ENCODE measurements at regions of chr1 and their contacts with region 1.

Region 1: GRCh38 chr1:96756789-96757188 is 35.2 kb downstream of the PTBP2 start:
- DNase-seq: peak; percentile 9
- ATAC-seq: peak; percentile 64; the same call in 2 of the 3 replicates
- H3K4me3 ChIP-seq: no peak overlapping the region
- H3K27ac ChIP-seq: no peak overlapping the region
- H3K4me1 ChIP-seq: no peaks in the 10 kb centered on the region
- H3K27me3 ChIP-seq: no peaks in the 10 kb centered on the region
- CTCF ChIP-seq: peak; percentile 25
- EP300 ChIP-seq: no peak
- POLR2A ChIP-seq: no peak
- RAD21 ChIP-seq: peak; percentile 19; the same call in 1 of the 2 replicates

Region 2: GRCh38 chr1:96538111-96538641 is 218.6 kb before region 1 on chr1:
- CTCF ChIA-PET with region 1: no interaction called
- POLR2A ChIA-PET with region 1: no interaction called
- in situ Hi-C with region 1: no loop called
- intact Hi-C with region 1: loop called (anchors 5 kb)
- DNase-seq: peak; percentile 31
- ATAC-seq: peak; percentile 96
- H3K4me3 ChIP-seq: no peak overlapping the region
- H3K27ac ChIP-seq: no peak overlapping the region
- H3K4me1 ChIP-seq: no peaks in the 10 kb centered on the region
- H3K27me3 ChIP-seq: 0 out of 5 replicates have a peak, but pooled peaks cover 0 to 3% of the 10 kb centered on the region in 2 experiments
- CTCF ChIP-seq: peak; percentile 69
- EP300 ChIP-seq: no peak
- POLR2A ChIP-seq: no peak
- RAD21 ChIP-seq: no peak

Region 3: GRCh38 chr1:96698342-96698983 is 58.3 kb before region 1 on chr1:
- CTCF ChIA-PET with region 1: no interaction called
- POLR2A ChIA-PET with region 1: no interaction called
- in situ Hi-C with region 1: loop called (anchors 10 kb)
- intact Hi-C with region 1: no loop called
- DNase-seq: no peak
- ATAC-seq: no peak
- H3K4me3 ChIP-seq: no peak overlapping the region
- H3K27ac ChIP-seq: no peak overlapping the region
- H3K4me1 ChIP-seq: peaks cover 6% of the 10 kb centered on the region; the same call in 1 of the 2 replicates
- H3K27me3 ChIP-seq: no peaks in the 10 kb centered on the region
- CTCF ChIP-seq: no peak
- EP300 ChIP-seq: no peak
- POLR2A ChIP-seq: no peak
- RAD21 ChIP-seq: no peak

Region 4: GRCh38 chr1:96790599-96790998 is 33.8 kb after region 1 on chr1:
- CTCF ChIA-PET with region 1: no interaction called
- POLR2A ChIA-PET with region 1: no interaction called
- in situ Hi-C with region 1: no loop called
- intact Hi-C with region 1: no loop called
- DNase-seq: no peak
- ATAC-seq: no peak
- H3K4me3 ChIP-seq: no peak overlapping the region
- H3K27ac ChIP-seq: no peak overlapping the region
- H3K4me1 ChIP-seq: peaks cover 9% of the 10 kb centered on the region
- H3K27me3 ChIP-seq: no peaks in the 10 kb centered on the region
- CTCF ChIP-seq: no peak
- EP300 ChIP-seq: no peak
- POLR2A ChIP-seq: no peak
- RAD21 ChIP-seq: no peak

Region 5: GRCh38 chr1:96815914-96816313 is 59.1 kb after region 1 on chr1:
- CTCF ChIA-PET with region 1: no interaction called
- POLR2A ChIA-PET with region 1: no interaction called
- in situ Hi-C with region 1: no loop called
- intact Hi-C with region 1: no loop called
- DNase-seq: no peak
- ATAC-seq: no peak
- H3K4me3 ChIP-seq: no peak overlapping the region
- H3K27ac ChIP-seq: no peak overlapping the region
- H3K4me1 ChIP-seq: no peaks in the 10 kb centered on the region
- H3K27me3 ChIP-seq: no peaks in the 10 kb centered on the region
- CTCF ChIP-seq: no peak
- EP300 ChIP-seq: no peak
- POLR2A ChIP-seq: no peak
- RAD21 ChIP-seq: no peak

Region 6: GRCh38 chr1:96865731-96866685 is 109.2 kb after region 1 on chr1:
- CTCF ChIA-PET with region 1: no interaction called
- POLR2A ChIA-PET with region 1: no interaction called
- in situ Hi-C with region 1: no loop called
- intact Hi-C with region 1: no loop called
- DNase-seq: no peak
- ATAC-seq: no peak
- H3K4me3 ChIP-seq: no peak overlapping the region
- H3K27ac ChIP-seq: no peak overlapping the region
- H3K4me1 ChIP-seq: no peaks in the 10 kb centered on the region
- H3K27me3 ChIP-seq: no peaks in the 10 kb centered on the region
- CTCF ChIP-seq: no peak
- EP300 ChIP-seq: no peak
- POLR2A ChIP-seq: no peak
- RAD21 ChIP-seq: no peak